PC-9 (cell line): ENCODE measurements at regions of chr11 and their contacts with region 1.

Region 1: GRCh38 chr11:18285841-18286240 is 19.8 kb downstream of the SAA1 start:
- DNase-seq: no peak
- H3K4me3 ChIP-seq: no peak overlapping the region
- H3K27ac ChIP-seq: no peak overlapping the region
- H3K4me1 ChIP-seq: no peaks in the 10 kb centered on the region
- H3K27me3 ChIP-seq: no peaks in the 10 kb centered on the region
- CTCF ChIP-seq: no peak

Region 2: DNA sequence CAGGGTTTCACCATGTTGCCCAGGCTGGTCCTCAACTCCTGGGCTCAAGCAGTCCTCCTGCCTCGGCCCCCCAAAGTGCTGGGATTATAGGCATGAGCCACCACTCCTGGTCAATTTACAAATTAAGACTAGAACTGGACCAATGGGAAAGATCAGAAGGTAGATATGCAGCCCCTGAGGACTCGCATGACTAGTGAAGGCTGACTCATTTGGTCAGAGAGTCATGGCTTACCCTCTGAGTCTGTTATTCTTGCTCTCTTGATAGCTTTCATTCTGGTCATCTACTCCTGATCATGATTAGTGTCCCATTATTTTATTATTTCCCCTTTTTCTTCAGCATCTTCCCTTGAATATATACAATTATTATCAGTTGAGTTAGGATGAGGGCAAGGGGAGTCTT is 167.1 kb after region 1 on chr11:
- CTCF ChIA-PET with region 1: no interaction called
- POLR2A ChIA-PET with region 1: interaction called, 12 read pairs
- intact Hi-C with region 1: no loop called
- DNase-seq: peak in 1 of 2 experiments; percentile 56
- H3K4me3 ChIP-seq: no peak overlapping the region
- H3K27ac ChIP-seq: no peak overlapping the region
- H3K4me1 ChIP-seq: peaks cover 19% of the 10 kb centered on the region
- H3K27me3 ChIP-seq: no peaks in the 10 kb centered on the region
- CTCF ChIP-seq: no peak